Heart left ventricle (tissue), 16 donors: ENCODE measurements at regions of chr15 and their contacts with region 1.

Region 1: GRCh38 chr15:90062023-90062442 is 40.2 kb downstream of the IDH2 start:
- DNase-seq: peak in 4 of 5 donors; percentile 61 to 74 (median 69)
- ATAC-seq: peak in 2 of 4 donors; percentile 6 to 16
- H3K4me3 ChIP-seq: no peak overlapping the region
- H3K27ac ChIP-seq: peak overlapping the region in 7 of 12 donors; percentile 10 to 90 (median 85)
- H3K4me1 ChIP-seq: peaks cover 3 to 85% (median 56%) of the 10 kb centered on the region in 12 donors
- H3K27me3 ChIP-seq: no peaks in the 10 kb centered on the region
- CTCF ChIP-seq: no peak
- POLR2A ChIP-seq: no peak

Region 2: DNA sequence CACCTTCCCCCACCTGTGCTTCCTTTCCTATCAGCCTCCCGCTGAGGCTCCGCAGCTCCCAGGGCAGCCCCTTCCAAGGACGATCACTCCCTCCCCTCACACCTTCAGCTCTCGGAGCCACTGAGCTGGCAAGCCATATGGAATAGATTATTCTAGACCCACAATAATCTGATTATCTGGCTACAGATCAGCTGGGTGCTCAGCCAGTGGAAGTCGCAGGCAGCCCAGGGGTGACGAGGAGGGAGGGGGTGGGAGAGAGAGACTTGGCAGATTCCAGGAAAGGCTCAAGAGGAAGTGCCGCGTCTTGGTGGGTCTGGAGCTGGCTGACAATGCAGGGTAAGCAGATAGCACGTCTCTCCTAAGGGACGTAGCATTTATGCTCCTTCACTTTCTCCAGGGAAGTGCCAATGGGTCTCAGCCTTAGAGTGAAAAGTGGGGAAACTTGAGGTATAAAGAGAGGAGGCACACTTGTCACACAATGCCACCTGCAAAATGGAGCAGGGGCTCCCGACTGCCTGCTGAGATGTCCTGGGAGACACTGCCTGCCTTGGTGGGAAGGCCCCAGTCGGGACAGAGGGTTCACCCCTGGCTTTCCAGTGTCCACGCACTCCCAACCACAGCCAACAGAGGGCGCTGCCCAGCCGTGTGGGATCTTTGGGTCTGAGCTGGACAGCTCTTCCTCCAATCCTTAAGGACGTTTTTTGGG is 301.6 kb before region 1 on chr15:
- intact Hi-C with region 1: loop called in 1 of 10 experiments (anchors 5 kb)
- DNase-seq: peak; percentile 67 to 89 (median 77)
- ATAC-seq: peak; percentile 76 to 93 (median 90)
- H3K4me3 ChIP-seq: no peak overlapping the region
- H3K27ac ChIP-seq: no peak overlapping the region
- H3K4me1 ChIP-seq: peaks cover 0 to 12% (median 0%) of the 10 kb centered on the region in 12 donors
- H3K27me3 ChIP-seq: no peaks in the 10 kb centered on the region
- CTCF ChIP-seq: peak; percentile 91 to 97 (median 94)
- POLR2A ChIP-seq: no peak

Region 3: GRCh38 chr15:89893696-89894455 is 168.2 kb before region 1 on chr15 and contains the start of gene AP3S2:
- intact Hi-C with region 1: loop called in 2 of 10 experiments (anchors 1 to 5 kb)
- DNase-seq: peak; percentile 90 to 94 (median 93)
- ATAC-seq: peak; percentile 98 to 99 (median 99)
- H3K4me3 ChIP-seq: peak within 1 kb of the TSS; percentile 55 to 100 (median 91)
- H3K27ac ChIP-seq: peak within 1 kb of the TSS; percentile 42 to 98 (median 92)
- H3K4me1 ChIP-seq: peaks cover 0 to 30% (median 13%) of the 10 kb centered on the region in 12 donors
- H3K27me3 ChIP-seq: no peaks in the 10 kb centered on the region
- CTCF ChIP-seq: peak in 1 of 12 donors; percentile 7
- POLR2A ChIP-seq: peak in 1 of 2 donors; percentile 61
- total RNA-seq, gene AP3S2: 37.1 to 64.6 (median 43.3) TPM

Region 4: DNA sequence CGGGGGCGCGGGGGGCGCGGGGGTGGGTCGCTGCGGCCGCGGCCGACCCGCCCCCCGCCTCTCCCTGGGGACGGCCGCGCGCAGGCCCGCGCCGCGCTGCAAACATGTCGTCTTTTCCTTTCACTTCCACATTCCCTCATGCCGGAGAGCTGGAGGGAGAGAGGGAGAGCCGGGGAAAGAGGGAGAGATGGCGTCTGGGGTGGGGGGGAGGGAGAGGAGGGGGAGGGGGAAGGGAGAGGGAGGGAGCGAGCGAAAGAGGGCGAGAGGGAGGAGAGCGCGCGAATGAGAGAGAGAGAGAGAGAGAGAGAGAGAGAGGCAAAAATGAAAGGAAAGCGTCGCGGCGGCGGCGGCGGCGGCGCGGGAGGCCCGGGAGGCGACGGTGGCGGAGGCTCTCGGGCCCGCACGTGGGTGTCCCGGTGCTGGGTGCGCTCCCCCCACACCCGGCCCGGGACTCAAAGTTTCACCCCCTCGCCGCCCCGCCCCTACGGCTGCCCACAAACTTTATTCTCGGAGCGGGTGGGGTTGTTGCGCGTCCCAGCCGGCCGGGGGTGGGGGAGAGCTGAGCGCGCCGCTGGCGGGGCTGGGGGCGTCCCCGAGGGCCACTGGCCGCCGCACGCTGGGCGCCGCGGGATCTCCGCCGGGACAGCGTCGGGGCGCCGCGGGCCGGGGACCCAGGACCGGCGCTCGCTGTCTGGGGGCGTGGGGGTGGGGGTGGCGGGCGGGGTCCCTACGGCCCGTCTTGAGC is 60.2 kb before region 1 on chr15:
- intact Hi-C with region 1: loop called in 6 of 10 experiments (anchors 2 to 10 kb)
- DNase-seq: peak; percentile 64 to 77 (median 76)
- ATAC-seq: peak in 3 of 4 donors; percentile 25 to 50 (median 46)
- H3K4me3 ChIP-seq: peak overlapping the region; percentile 66 to 98 (median 85)
- H3K27ac ChIP-seq: peak overlapping the region; percentile 69 to 95 (median 87)
- H3K4me1 ChIP-seq: peaks cover 0 to 71% (median 39%) of the 10 kb centered on the region in 12 donors
- H3K27me3 ChIP-seq: no peaks in the 10 kb centered on the region
- CTCF ChIP-seq: no peak
- POLR2A ChIP-seq: no peak

Region 5: GRCh38 chr15:90031231-90031791 is 30.7 kb before region 1 on chr15:
- intact Hi-C with region 1: loop called in 1 of 10 experiments (anchors 5 kb)
- DNase-seq: peak in 1 of 5 donors; percentile 26
- ATAC-seq: peak in 3 of 4 donors; percentile 30 to 48 (median 34)
- H3K4me3 ChIP-seq: peak overlapping the region in 1 of 12 donors; percentile 5
- H3K27ac ChIP-seq: peak overlapping the region in 8 of 12 donors; percentile 39 to 97 (median 46)
- H3K4me1 ChIP-seq: peaks cover 6 to 88% (median 40%) of the 10 kb centered on the region in 12 donors
- H3K27me3 ChIP-seq: no peaks in the 10 kb centered on the region
- CTCF ChIP-seq: no peak
- POLR2A ChIP-seq: no peak